ENCODE measurements at regions of chr1 and their contacts with region 1.

Region 1: GRCh38 chr1:181044449-181044966 is 10.7 kb downstream of the MR1 start:
- DNase-seq: peak; percentile 69 to 73
- ATAC-seq: peak; percentile 90 to 97 (median 95)
- H3K4me3 ChIP-seq: no peak overlapping the region
- H3K4me3 Mint-ChIP-seq: peak overlapping the region; percentile 81
- H3K27ac ChIP-seq: peak overlapping the region; percentile 78
- H3K27ac Mint-ChIP-seq: peak overlapping the region; percentile 90 to 97
- H3K4me1 ChIP-seq: peaks cover 31% of the 10 kb centered on the region
- H3K4me1 Mint-ChIP-seq: peaks cover 45 to 46% of the 10 kb centered on the region in 2 donors
- H3K27me3 ChIP-seq: no peaks in the 10 kb centered on the region
- H3K27me3 Mint-ChIP-seq: no peaks in the 10 kb centered on the region
- CTCF ChIP-seq: no peak

Region 2: GRCh38 chr1:181033799-181034451 is 10.6 kb before region 1 on chr1 and contains the start of gene MR1:
- intact Hi-C with region 1: loop called (anchors 1 kb)
- DNase-seq: peak in 1 of 2 donors; percentile 91
- ATAC-seq: peak; percentile 95 to 98 (median 97)
- H3K4me3 ChIP-seq: peak within 1 kb of the TSS; percentile 85
- H3K4me3 Mint-ChIP-seq: peak within 1 kb of the TSS; percentile 98
- H3K27ac ChIP-seq: peak within 1 kb of the TSS; percentile 96
- H3K27ac Mint-ChIP-seq: peak within 1 kb of the TSS; percentile 98 to 100
- H3K4me1 ChIP-seq: peaks cover 29% of the 10 kb centered on the region
- H3K4me1 Mint-ChIP-seq: peaks cover 60 to 66% of the 10 kb centered on the region in 2 donors
- H3K27me3 ChIP-seq: no peaks in the 10 kb centered on the region
- H3K27me3 Mint-ChIP-seq: no peaks in the 10 kb centered on the region
- CTCF ChIP-seq: no peak
- total RNA-seq, gene MR1: 27.8 to 35.3 (median 34.6) TPM

Region 3: DNA sequence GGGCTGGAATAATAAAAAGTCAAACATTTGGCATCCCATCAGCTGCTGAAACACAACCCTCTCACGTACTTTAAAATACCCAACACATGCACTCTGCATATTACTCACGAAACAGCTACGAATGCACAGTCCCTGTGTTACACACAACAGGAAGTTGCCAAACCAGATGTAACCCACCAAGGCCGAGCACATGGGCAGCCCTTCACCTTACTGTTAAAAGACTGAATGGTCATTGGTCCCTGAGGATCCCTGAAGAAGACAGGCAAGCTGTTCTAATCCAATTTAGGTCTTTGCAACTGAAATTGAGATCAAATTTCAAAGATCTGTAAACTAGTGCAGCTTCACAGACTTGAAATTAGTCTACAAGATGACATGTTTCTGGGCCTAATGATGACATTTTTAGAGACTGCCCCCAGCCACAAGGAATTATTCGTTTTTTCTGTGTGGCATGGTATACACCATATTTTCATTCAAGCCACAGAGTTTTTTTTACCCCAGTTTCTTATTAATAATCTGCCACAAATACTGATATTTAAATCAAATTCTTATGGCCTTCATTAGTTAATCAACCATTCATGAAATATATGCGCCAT is 18.4 kb after region 1 on chr1:
- intact Hi-C with region 1: loop called (anchors 2 kb)
- DNase-seq: peak; percentile 37 to 58
- ATAC-seq: peak; percentile 91 to 93 (median 92)
- H3K4me3 ChIP-seq: peak overlapping the region; percentile 35
- H3K4me3 Mint-ChIP-seq: peak overlapping the region; percentile 87
- H3K27ac ChIP-seq: peak overlapping the region; percentile 92
- H3K27ac Mint-ChIP-seq: peak overlapping the region; percentile 91 to 98
- H3K4me1 ChIP-seq: peaks cover 17% of the 10 kb centered on the region
- H3K4me1 Mint-ChIP-seq: peaks cover 24 to 25% of the 10 kb centered on the region in 2 donors
- H3K27me3 ChIP-seq: no peaks in the 10 kb centered on the region
- H3K27me3 Mint-ChIP-seq: no peaks in the 10 kb centered on the region
- CTCF ChIP-seq: no peak

Region 4: GRCh38 chr1:181105134-181106021 is 60.9 kb after region 1 on chr1:
- intact Hi-C with region 1: loop called (anchors 2 kb)
- DNase-seq: peak; percentile 91 to 94
- ATAC-seq: peak; percentile 86 to 95 (median 89)
- H3K4me3 ChIP-seq: peak overlapping the region; percentile 81
- H3K4me3 Mint-ChIP-seq: peak overlapping the region; percentile 93
- H3K27ac ChIP-seq: peak overlapping the region; percentile 80
- H3K27ac Mint-ChIP-seq: peak overlapping the region; percentile 85 to 98
- H3K4me1 ChIP-seq: peaks cover 32% of the 10 kb centered on the region
- H3K4me1 Mint-ChIP-seq: peaks cover 39 to 44% of the 10 kb centered on the region in 2 donors
- H3K27me3 ChIP-seq: no peaks in the 10 kb centered on the region
- H3K27me3 Mint-ChIP-seq: peaks cover 8 to 15% of the 10 kb centered on the region in 2 donors
- CTCF ChIP-seq: no peak